ENCODE measurements at regions of chr1 and their contacts with region 1.

Region 1: GRCh38 chr1:32933742-32934322 is 30.8 kb downstream of the RNF19B start:
- DNase-seq: no peak
- H3K4me3 ChIP-seq: no peak overlapping the region
- H3K27ac ChIP-seq: peak overlapping the region in 3 of 4 donors; percentile 44 to 55 (median 50)
- H3K4me1 ChIP-seq: peaks cover 0 to 12% (median 11%) of the 10 kb centered on the region in 4 donors
- H3K27me3 ChIP-seq: no peaks in the 10 kb centered on the region
- CTCF ChIP-seq: no peak
- EP300 ChIP-seq: no peak
- POLR2A ChIP-seq: no peak

Region 2: GRCh38 chr1:32619701-32620485 is 313.9 kb before region 1 on chr1:
- intact Hi-C with region 1: no loop called
- DNase-seq: no peak
- H3K4me3 ChIP-seq: no peak overlapping the region
- H3K27ac ChIP-seq: no peak overlapping the region
- H3K4me1 ChIP-seq: no peaks in the 10 kb centered on the region
- H3K27me3 ChIP-seq: no peaks in the 10 kb centered on the region
- CTCF ChIP-seq: peak in 2 of 3 experiments; percentile 19 to 23
- EP300 ChIP-seq: no peak
- POLR2A ChIP-seq: no peak

Region 3: DNA sequence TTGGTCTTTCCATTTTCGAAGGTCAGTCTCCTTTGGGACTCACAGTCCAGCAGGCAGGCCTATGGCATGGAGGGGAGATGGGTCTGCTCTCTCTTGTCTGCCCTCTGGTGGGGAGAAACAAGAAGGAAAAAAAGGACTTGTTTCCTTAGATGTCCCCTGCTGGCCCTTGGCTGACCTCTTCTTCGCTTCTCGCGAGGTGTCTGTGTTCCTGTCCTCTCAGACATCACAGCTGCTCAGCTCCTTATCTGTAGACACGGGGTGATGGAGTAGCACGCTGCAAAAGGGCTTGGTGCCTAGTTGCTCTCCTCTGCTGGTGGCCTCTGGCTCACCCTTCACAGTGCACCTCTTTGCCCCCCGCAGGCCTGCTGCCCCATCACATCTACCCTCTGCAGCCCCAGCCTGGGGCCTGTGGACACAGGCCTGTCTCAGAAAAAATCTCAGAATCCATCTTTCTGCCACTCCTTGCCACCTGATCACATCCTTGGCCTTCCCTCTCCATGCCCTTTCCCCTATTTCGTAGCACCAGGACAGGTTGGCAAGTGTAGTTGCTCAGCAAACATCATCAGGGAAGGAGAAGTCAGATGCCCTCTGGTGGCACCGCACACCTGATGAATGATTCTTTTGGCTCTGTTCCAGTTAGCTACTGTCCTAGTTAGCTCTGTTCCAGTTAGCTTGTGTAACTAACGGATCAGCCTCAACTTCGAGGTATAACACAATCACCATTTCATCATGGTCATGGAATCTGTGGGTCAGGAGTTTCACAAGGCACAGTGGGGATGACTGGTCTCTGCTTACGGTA is 121.6 kb after region 1 on chr1:
- intact Hi-C with region 1: loop called (anchors 2 kb)
- DNase-seq: peak; percentile 93
- H3K4me3 ChIP-seq: no peak overlapping the region
- H3K27ac ChIP-seq: peak overlapping the region; percentile 42 to 76 (median 56)
- H3K4me1 ChIP-seq: peaks cover 4 to 19% (median 18%) of the 10 kb centered on the region in 4 donors
- H3K27me3 ChIP-seq: no peaks in the 10 kb centered on the region
- CTCF ChIP-seq: peak; percentile 66 to 77 (median 68)
- EP300 ChIP-seq: no peak
- POLR2A ChIP-seq: no peak

Region 4: GRCh38 chr1:33086384-33086850 is 152.6 kb after region 1 on chr1:
- intact Hi-C with region 1: loop called (anchors 2 kb)
- DNase-seq: peak; percentile 94
- H3K4me3 ChIP-seq: no peak overlapping the region
- H3K27ac ChIP-seq: no peak overlapping the region
- H3K4me1 ChIP-seq: peaks cover 7 to 18% (median 14%) of the 10 kb centered on the region in 4 donors
- H3K27me3 ChIP-seq: no peaks in the 10 kb centered on the region
- CTCF ChIP-seq: peak; percentile 68 to 82 (median 69)
- EP300 ChIP-seq: no peak
- POLR2A ChIP-seq: no peak

Measured in esophagus muscularis mucosa (tissue), 4 donors.